Caco-2 (cell line): ENCODE measurements at regions of chrX and their contacts with region 1.

Region 1: DNA sequence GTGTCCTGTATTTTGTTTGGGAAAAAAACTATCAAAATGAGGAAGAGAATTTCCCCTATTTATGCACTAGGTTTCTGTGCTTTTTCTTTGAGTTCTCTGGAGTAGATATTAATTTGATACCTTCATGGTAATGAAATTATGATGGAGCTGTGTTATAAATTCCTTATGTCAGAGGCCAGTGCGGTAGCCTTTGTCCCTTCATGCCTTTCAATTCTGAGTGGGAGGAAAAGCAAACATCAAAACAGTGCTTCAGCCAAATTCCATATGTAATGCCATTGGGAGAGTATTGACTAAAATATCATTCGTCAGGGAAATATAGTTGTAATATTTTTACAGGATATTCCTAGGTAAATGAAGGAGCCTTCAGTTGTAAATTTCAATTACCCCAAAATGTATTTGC is 17.6 kb upstream of the RGN start:
- DNase-seq: no peak
- H3K4me3 ChIP-seq: no peak overlapping the region
- H3K4me3 Mint-ChIP-seq: peak overlapping the region; percentile 42
- H3K27ac Mint-ChIP-seq: no peak overlapping the region
- H3K4me1 ChIP-seq: peaks cover 50% of the 10 kb centered on the region
- H3K4me1 Mint-ChIP-seq: peaks cover 26% of the 10 kb centered on the region
- H3K27me3 ChIP-seq: no peaks in the 10 kb centered on the region
- H3K27me3 Mint-ChIP-seq: no peaks in the 10 kb centered on the region
- CTCF ChIP-seq: no peak

Region 2: DNA sequence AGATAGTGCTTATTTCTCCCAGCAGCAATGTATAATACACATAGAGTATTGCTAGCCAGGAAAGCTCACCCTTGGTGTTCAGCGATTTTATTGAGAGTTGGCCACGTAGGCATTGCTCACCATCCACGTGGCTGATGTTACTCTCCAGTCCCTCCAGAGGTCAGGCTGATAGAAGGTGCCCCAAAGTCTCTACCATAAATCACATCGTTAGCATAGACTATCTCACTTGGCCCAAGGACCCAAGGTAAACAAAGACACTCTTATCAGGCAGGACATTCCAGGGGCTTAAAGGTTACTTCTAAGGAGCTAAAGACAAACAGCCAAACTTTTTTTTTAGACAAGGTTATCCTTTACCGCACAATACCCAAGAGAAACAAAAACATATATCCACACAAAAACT is 12.7 kb before region 1 on chrX:
- CTCF ChIA-PET with region 1: interaction called, 5 read pairs
- POLR2A ChIA-PET with region 1: no interaction called
- intact Hi-C with region 1: loop called (anchors 1 kb)
- DNase-seq: peak; percentile 74 to 82
- H3K4me3 ChIP-seq: no peak overlapping the region
- H3K4me3 Mint-ChIP-seq: peak overlapping the region; percentile 43
- H3K27ac Mint-ChIP-seq: no peak overlapping the region
- H3K4me1 ChIP-seq: peaks cover 11% of the 10 kb centered on the region
- H3K4me1 Mint-ChIP-seq: peaks cover 8% of the 10 kb centered on the region
- H3K27me3 ChIP-seq: no peaks in the 10 kb centered on the region
- H3K27me3 Mint-ChIP-seq: no peaks in the 10 kb centered on the region
- CTCF ChIP-seq: peak in 1 of 2 experiments; percentile 33